Mammary epithelial cell (primary cell): ENCODE measurements at regions of chr16 and their contacts with region 1.

Region 1: GRCh38 chr16:89686520-89687091 is at the start of gene CDK10:
- DNase-seq: peak; percentile 76
- H3K4me3 ChIP-seq: peak within 1 kb of the TSS; percentile 82 to 89 (median 84)
- H3K27ac ChIP-seq: peak within 1 kb of the TSS; percentile 17
- H3K4me1 ChIP-seq: peaks cover 5% of the 10 kb centered on the region
- H3K27me3 ChIP-seq: no peaks in the 10 kb centered on the region
- CTCF ChIP-seq: no peak
- total RNA-seq, gene CDK10: 38.5 to 72.0 TPM

Region 2: GRCh38 chr16:89449726-89450335 is 236.8 kb before region 1 on chr16:
- CTCF ChIA-PET with region 1: no interaction called
- dilution Hi-C with region 1: loop called (anchors 5 kb)
- in situ Hi-C with region 1: no loop called
- intact Hi-C with region 1: no loop called
- DNase-seq: peak; percentile 42
- H3K4me3 ChIP-seq: no peak overlapping the region
- H3K27ac ChIP-seq: peak overlapping the region; percentile 19
- H3K4me1 ChIP-seq: peaks cover 42% of the 10 kb centered on the region
- H3K27me3 ChIP-seq: no peaks in the 10 kb centered on the region
- CTCF ChIP-seq: no peak

Region 3: GRCh38 chr16:89560378-89561141 is 126.0 kb before region 1 on chr16 and contains the start of gene RPL13:
- CTCF ChIA-PET with region 1: no interaction called
- dilution Hi-C with region 1: loop called (anchors 5 kb)
- in situ Hi-C with region 1: no loop called
- intact Hi-C with region 1: no loop called
- DNase-seq: peak; percentile 95
- H3K4me3 ChIP-seq: peak within 1 kb of the TSS; percentile 64 to 81 (median 78)
- H3K27ac ChIP-seq: peak within 1 kb of the TSS; percentile 88
- H3K4me1 ChIP-seq: peaks cover 43% of the 10 kb centered on the region
- H3K27me3 ChIP-seq: no peaks in the 10 kb centered on the region
- CTCF ChIP-seq: no peak
- total RNA-seq, gene RPL13: 1,876 to 2,450 TPM

Region 4: GRCh38 chr16:89615596-89616090 is 71.0 kb before region 1 on chr16:
- CTCF ChIA-PET with region 1: no interaction called
- dilution Hi-C with region 1: loop called (anchors 5 kb)
- in situ Hi-C with region 1: no loop called
- intact Hi-C with region 1: no loop called
- DNase-seq: no peak
- H3K4me3 ChIP-seq: no peak overlapping the region
- H3K27ac ChIP-seq: no peak overlapping the region
- H3K4me1 ChIP-seq: no peaks in the 10 kb centered on the region
- H3K27me3 ChIP-seq: no peaks in the 10 kb centered on the region
- CTCF ChIP-seq: peak; percentile 44 to 79

Region 5: DNA sequence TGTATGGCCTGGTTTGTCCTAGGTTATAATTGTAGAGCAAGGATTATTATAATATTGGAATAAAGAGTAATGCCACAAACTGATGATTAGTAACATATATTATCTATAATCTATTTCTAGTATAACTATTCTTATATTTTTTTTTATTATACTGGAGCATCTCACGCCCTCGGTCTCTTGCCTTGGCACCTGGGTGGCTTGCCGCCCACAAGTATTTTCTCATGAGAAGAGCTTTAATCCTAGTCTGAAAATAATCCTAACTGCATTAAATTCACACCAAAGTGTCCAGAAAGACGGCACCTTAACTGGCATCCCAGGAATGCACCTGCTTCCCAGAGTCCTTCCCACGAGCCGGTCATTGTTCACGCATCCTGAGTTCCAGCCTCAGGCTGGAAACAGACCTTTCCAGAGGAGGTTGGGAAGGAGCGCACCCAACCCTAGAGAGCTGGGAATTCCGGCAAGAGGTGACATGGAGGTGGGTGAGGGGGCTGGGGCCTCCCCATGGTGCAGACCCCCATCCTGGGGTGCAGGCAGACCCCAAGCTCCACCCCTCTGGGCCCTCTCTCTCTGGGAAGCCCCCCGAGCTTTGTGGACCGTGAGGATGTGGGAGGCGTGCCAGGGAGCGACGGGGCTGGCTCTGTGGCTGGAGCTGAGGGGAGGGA is 45.0 kb before region 1 on chr16:
- CTCF ChIA-PET with region 1: no interaction called
- dilution Hi-C with region 1: loop called (anchors 5 kb)
- in situ Hi-C with region 1: no loop called
- intact Hi-C with region 1: no loop called
- DNase-seq: no peak
- H3K4me3 ChIP-seq: no peak overlapping the region
- H3K27ac ChIP-seq: no peak overlapping the region
- H3K4me1 ChIP-seq: peaks cover 4% of the 10 kb centered on the region
- H3K27me3 ChIP-seq: no peaks in the 10 kb centered on the region
- CTCF ChIP-seq: no peak

Region 6: DNA sequence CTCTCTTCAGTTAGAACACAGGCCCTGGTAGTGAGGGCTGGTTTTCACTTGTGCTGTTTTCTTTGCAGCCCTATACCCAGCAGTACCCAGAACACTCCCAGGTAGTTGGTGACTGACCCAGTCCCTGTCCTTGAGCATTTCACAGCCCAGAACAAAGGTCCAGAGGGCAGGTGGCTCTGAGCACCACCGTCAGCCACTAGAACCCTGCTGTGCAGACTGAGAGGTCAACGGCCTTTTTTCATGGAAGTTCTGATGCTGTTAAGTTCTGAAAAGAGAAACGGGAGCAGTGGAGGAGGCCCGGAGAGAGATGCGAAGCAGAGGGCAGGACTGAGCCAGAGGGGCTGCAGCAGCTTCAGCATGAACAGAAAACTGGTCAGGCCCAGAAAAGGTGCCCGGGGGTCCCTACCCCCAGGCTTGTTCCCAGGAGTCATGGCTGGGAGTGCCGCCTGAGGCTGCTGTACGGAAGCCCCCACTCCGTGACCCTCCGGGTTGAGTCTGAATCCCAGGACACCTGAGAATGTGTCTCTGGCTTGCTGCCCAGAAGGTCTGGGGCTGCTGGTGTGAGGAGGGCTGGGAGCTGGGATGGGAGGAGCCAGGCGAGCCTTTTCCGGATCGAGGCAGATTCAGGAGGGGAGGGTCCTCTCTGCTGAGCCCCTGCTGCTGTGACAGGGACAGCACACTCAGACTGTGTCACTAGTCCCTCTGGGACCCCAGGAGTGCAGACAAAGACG is 43.4 kb after region 1 on chr16:
- CTCF ChIA-PET with region 1: no interaction called
- dilution Hi-C with region 1: loop called (anchors 5 kb)
- in situ Hi-C with region 1: no loop called
- intact Hi-C with region 1: no loop called
- DNase-seq: no peak
- H3K4me3 ChIP-seq: no peak overlapping the region
- H3K27ac ChIP-seq: no peak overlapping the region
- H3K4me1 ChIP-seq: no peaks in the 10 kb centered on the region
- H3K27me3 ChIP-seq: no peaks in the 10 kb centered on the region
- CTCF ChIP-seq: no peak

Region 7: DNA sequence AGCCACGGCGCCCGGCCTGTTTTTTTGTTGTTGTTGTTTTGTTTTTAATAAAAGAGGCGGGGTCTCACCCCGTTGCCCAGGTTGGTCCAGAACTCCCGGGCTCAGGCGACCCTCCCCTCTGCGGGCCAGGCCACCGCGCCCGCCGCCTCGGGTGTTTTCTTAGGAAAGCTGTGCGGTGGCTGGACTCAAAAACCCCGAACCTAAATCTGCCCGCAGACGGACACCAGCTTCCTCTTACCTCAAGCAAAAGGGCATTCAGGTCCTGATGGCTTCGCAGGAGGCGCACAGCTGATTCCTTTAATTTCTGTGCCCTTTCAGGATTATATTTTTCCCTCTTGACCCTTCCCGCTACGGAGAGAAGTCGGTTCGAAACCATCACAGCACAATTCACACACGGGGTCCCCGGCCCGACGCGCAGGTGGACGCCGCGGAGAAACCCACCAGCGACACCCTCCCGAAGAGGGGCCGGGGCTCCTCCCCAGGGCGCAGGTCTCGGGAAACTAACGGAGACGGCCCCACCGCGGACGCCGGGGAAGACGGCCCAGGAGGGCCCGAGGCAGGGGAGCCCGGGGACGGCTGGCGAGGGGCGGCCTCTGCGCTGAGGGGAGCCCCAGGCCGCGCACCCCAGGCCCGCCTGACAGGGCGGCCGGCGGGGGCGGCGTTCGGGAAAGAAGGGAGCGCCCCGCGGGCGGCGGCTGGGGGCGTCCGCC is 129.2 kb after region 1 on chr16:
- CTCF ChIA-PET with region 1: no interaction called
- dilution Hi-C with region 1: loop called (anchors 5 kb)
- in situ Hi-C with region 1: no loop called
- intact Hi-C with region 1: no loop called
- DNase-seq: no peak
- H3K4me3 ChIP-seq: peak overlapping the region; percentile 79 to 84 (median 80)
- H3K27ac ChIP-seq: peak overlapping the region; percentile 3
- H3K4me1 ChIP-seq: peaks cover 5% of the 10 kb centered on the region
- H3K27me3 ChIP-seq: no peaks in the 10 kb centered on the region
- CTCF ChIP-seq: no peak